ENCODE measurements at regions of chr2 and their contacts with region 1.

Region 1: DNA sequence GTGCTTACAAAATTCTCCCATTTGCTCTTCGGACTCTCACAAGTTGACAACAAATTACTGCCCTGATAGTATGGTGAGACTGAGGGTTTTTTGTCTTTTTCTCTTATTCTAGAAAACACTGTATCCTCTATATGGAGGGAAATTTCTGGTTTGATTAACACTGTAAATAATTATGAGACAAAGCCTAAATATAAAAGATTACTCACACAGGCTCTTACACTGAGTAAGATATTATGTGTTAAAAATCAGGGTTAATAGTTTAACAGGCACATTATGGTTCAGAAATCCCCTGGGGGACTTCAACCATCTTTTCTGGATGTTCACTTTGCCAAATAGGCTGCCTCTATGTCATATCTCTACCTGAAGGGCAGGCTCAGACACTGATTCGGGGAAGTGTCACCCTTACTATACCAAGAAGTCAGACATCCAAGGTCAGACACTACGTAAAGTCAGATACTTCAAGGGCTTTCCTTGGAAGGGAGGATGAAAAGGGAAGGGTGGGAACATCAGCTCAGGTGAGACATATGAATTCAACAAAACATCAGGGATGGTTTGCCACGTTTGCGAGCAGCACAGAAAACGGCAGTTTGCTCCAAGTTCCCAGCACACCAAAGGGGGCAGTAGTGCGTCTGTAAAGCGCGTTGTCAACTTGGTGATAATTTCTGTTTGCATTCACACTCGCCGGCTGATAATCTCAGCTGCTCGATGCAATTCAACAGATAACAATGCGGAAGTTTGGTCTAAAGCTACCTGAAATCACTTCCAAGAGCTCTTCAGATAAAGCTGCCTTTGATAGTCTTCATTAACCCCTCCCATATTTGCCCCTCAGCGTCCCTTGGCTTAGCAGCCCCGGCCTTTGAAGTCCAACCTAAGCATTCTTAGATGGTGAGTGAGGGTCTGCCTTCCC is 972 bp upstream of the RASGRP3 start:
- DNase-seq: peak; percentile 30 to 87 (median 78)
- H3K4me3 ChIP-seq: peak overlapping the region; percentile 50 to 84 (median 72)
- H3K27ac ChIP-seq: peak overlapping the region; percentile 83 to 99 (median 97)
- H3K27me3 ChIP-seq: no peaks in the 10 kb centered on the region
- CTCF ChIP-seq: peak; percentile 65 to 92 (median 84)

Region 2: GRCh38 chr2:33412920-33413319 is 62.6 kb before region 1 on chr2:
- intact Hi-C with region 1: loop called in 1 of 2 experiments (anchors 10 kb)
- DNase-seq: no peak
- H3K4me3 ChIP-seq: no peak overlapping the region
- H3K27ac ChIP-seq: peak overlapping the region in 2 of 59 donors; percentile 13 to 43
- H3K27me3 ChIP-seq: no peaks in the 10 kb centered on the region
- CTCF ChIP-seq: peak in 54 of 56 donors; percentile 23 to 75 (median 51)

Region 3: GRCh38 chr2:33505966-33506365 is 30.5 kb after region 1 on chr2:
- intact Hi-C with region 1: loop called (anchors 2 kb)
- DNase-seq: no peak
- H3K4me3 ChIP-seq: peak overlapping the region in 2 of 59 donors; percentile 25 to 40
- H3K27ac ChIP-seq: peak overlapping the region; percentile 70 to 100 (median 97)
- H3K27me3 ChIP-seq: no peaks in the 10 kb centered on the region
- CTCF ChIP-seq: peak in 2 of 56 donors; percentile 19 to 20

Region 4: GRCh38 chr2:33577668-33578067 is 102.2 kb after region 1 on chr2:
- intact Hi-C with region 1: loop called (anchors 2 to 5 kb)
- DNase-seq: no peak
- H3K4me3 ChIP-seq: peak overlapping the region in 20 of 59 donors; percentile 1 to 49 (median 26)
- H3K27ac ChIP-seq: peak overlapping the region; percentile 13 to 98 (median 91)
- H3K27me3 ChIP-seq: no peaks in the 10 kb centered on the region
- CTCF ChIP-seq: no peak

Region 5: GRCh38 chr2:33599175-33599942 is 123.9 kb after region 1 on chr2 and contains the start of gene FAM98A:
- intact Hi-C with region 1: loop called in 1 of 2 experiments (anchors 2 kb)
- DNase-seq: peak; percentile 96 to 99 (median 98)
- H3K4me3 ChIP-seq: peak within 1 kb of the TSS; percentile 68 to 99 (median 93)
- H3K27ac ChIP-seq: peak within 1 kb of the TSS; percentile 7 to 95 (median 84)
- H3K27me3 ChIP-seq: no peaks in the 10 kb centered on the region
- CTCF ChIP-seq: peak in 53 of 56 donors; percentile 12 to 69 (median 43)
- total RNA-seq, gene FAM98A: 32.7 to 127 (median 73.1) TPM

Measured in dorsolateral prefrontal cortex (tissue), 120 donors.